RWPE1 (cell line): ENCODE measurements at regions of chr17 and their contacts with region 1.

Region 1: GRCh38 chr17:1573916-1574696 is 11.5 kb upstream of the PITPNA start:
- DNase-seq: peak; percentile 77
- H3K27ac ChIP-seq: peak overlapping the region; percentile 88
- CTCF ChIP-seq: peak; percentile 95

Region 2: DNA sequence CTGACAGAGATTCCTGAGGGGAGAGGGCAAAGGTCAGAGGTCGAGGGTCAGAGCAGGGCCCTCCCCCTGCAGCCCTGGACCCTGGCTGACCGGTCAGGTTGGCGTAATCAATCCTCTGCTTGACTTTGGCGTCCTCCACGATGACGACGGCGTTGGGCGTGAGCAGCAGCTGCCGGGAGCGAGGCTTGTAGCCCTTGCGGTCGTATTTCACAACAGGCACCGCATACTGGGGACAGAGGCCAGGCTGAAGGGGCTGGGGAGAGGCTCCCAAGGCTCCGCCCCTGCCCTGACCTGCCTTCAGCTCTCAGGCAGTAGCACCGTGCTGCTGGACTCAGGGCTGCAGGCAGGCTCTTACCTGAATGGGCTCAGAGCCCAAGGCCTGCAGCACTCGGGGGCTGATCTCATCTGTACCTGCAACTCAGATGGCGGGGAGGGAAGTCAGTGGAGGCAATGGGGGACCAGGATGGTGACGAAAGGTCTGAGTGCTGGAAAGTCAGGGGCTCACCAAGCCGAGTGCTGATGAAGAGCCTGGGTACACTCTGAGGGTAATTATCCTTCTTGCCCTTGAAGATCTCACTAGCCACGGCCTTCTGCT is 106.1 kb before region 1 on chr17:
- CTCF ChIA-PET with region 1: no interaction called
- POLR2A ChIA-PET with region 1: no interaction called
- DNase-seq: no peak
- H3K27ac ChIP-seq: peak overlapping the region; percentile 25; the same call in 1 of the 2 replicates
- CTCF ChIP-seq: no peak

Region 3: DNA sequence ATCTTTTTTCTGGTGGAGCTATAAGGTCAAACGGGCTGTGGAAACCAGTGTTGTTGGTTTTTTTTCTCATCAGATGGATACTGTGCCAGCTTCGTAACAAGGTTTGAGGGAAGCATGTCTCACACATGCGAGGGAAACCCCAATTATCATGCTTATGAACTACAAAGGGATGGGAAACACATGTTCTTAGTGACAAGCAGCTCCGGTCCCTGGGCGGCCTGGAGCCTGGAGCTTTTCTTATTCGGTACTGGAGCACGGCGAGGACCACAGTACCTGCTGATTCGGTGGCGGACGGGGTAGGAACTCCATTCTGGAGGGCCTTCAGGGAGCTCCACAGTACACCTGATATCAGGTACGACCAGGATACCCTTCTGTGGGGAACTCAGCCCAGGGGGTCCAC is 42.0 kb after region 1 on chr17:
- CTCF ChIA-PET with region 1: interaction called, 11 read pairs
- POLR2A ChIA-PET with region 1: no interaction called
- DNase-seq: no peak
- H3K27ac ChIP-seq: no peak overlapping the region
- CTCF ChIP-seq: no peak

Region 4: DNA sequence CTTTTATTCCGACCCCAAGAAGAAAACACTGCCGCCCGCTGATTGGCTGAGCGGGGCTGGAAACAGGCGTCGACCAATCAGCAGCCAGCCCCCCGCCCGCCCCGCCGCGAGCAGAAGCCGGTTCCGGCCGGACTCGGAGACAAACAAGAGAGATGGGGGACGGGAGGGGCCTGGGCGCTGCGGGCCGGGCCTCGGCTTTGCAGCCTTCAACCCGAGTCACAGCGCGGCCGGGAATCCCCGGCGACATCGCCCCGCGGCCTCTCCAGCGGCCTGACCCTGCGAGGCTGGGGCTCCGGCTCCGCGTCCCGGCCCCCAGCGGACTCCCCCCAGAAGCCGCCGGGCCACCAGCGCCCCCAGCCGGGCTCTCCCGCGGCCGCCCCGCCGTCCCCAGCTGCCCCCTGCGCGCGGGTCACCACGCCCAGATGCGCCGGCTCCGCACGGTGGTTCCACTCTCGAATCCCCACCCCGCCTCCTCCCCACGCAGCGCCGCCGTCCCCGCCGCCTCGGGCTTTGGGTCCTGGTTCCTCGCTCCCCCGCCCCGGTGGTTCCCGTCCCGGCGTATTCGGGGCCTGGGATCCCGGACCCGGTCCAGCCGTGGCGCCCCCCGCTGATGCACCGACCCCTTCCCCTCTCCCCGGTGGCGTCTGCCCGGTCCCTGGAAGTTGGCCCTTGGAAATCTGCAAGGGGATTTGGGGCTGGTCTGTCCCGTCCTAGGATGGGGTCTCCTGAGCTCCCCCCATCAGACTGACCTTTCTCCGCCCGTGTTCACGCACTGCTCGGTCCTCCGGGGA is 54.9 kb after region 1 on chr17:
- CTCF ChIA-PET with region 1: interaction called, 55 read pairs
- POLR2A ChIA-PET with region 1: interaction called, 5 read pairs
- DNase-seq: peak; percentile 100
- H3K27ac ChIP-seq: peak overlapping the region; percentile 89
- CTCF ChIP-seq: peak; percentile 60

Region 5: GRCh38 chr17:1648963-1649843 is 75.1 kb after region 1 on chr17:
- CTCF ChIA-PET with region 1: interaction called, 18 read pairs
- POLR2A ChIA-PET with region 1: no interaction called
- DNase-seq: peak; percentile 94
- H3K27ac ChIP-seq: peak overlapping the region; percentile 100
- CTCF ChIP-seq: peak; percentile 91

Region 6: DNA sequence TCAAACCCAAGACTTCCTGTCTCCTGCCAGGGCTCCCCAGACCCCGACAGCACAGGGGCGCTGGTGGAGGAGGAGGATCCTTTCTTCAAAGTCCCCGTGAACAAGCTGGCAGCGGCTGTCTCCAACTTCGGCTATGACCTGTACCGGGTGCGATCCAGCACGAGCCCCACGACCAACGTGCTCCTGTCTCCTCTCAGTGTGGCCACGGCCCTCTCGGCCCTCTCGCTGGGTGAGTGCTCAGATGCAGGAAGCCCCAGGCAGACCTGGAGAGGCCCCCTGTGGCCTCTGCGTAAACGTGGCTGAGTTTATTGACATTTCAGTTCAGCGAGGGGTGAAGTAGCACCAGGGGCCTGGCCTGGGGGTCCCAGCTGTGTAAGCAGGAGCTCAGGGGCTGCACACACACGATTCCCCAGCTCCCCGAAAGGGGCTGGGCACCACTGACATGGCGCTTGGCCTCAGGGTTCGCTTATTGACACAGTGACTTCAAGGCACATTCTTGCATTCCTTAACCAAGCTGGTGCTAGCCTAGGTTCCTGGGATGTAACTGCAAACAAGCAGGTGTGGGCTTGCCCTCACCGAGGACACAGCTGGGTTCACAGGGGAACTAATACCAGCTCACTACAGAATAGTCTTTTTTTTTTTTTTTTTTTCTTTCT is 195.8 kb after region 1 on chr17:
- CTCF ChIA-PET with region 1: no interaction called
- POLR2A ChIA-PET with region 1: interaction called, 18 read pairs
- DNase-seq: peak; percentile 91
- H3K27ac ChIP-seq: peak overlapping the region; percentile 99
- CTCF ChIP-seq: no peak